Endothelial cell of umbilical vein (primary cell): ENCODE measurements at regions of chr1 and their contacts with region 1.

Region 1: DNA sequence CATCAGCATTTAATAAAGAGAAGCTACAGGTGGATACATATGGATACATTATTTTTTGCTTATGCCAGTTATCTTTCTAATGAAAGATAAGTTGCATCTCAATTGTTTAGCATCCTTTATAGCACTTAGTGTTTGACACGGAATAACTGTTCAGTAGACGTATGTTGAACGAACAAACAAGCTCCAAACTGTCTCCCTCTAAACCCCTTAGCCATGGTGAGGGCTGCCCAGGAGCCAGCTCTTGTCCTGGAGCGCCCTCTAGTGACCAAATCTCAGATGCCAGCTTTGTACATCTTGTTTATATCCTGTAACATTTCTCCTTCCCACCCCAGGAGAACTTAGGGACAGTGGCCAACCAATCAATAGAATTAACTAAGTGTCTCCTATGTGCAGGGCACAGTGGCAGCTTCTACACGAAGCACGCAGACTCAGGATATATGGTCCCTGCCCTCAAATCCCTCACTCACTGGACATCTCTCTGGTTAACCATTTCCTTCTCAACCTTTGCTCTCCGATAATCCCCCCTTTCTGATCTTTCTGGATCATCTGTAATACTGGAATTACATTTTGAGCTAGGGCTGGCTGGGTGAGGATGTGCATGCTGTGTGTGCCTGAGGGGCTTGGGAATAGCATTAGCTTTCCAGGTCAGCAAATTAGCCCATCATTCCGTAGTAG is 22.9 kb downstream of the KCNA10 start:
- DNase-seq: peak; percentile 75
- H3K4me3 ChIP-seq: no peak overlapping the region
- H3K27ac ChIP-seq: no peak overlapping the region
- H3K4me1 ChIP-seq: no peaks in the 10 kb centered on the region
- H3K27me3 ChIP-seq: peaks cover 0 to 7% of the 10 kb centered on the region in 2 experiments
- CTCF ChIP-seq: peak; percentile 77 to 85
- POLR2A ChIP-seq: no peak

Region 2: GRCh38 chr1:110053557-110054428 is 442.3 kb before region 1 on chr1:
- CTCF ChIA-PET with region 1: interaction called, 16 read pairs
- POLR2A ChIA-PET with region 1: no interaction called
- dilution Hi-C with region 1: no loop called
- intact Hi-C with region 1: no loop called
- DNase-seq: peak; percentile 39
- H3K4me3 ChIP-seq: no peak overlapping the region
- H3K27ac ChIP-seq: no peak overlapping the region
- H3K4me1 ChIP-seq: no peaks in the 10 kb centered on the region
- H3K27me3 ChIP-seq: no peaks in the 10 kb centered on the region
- CTCF ChIP-seq: peak; percentile 83 to 97
- POLR2A ChIP-seq: no peak

Region 3: DNA sequence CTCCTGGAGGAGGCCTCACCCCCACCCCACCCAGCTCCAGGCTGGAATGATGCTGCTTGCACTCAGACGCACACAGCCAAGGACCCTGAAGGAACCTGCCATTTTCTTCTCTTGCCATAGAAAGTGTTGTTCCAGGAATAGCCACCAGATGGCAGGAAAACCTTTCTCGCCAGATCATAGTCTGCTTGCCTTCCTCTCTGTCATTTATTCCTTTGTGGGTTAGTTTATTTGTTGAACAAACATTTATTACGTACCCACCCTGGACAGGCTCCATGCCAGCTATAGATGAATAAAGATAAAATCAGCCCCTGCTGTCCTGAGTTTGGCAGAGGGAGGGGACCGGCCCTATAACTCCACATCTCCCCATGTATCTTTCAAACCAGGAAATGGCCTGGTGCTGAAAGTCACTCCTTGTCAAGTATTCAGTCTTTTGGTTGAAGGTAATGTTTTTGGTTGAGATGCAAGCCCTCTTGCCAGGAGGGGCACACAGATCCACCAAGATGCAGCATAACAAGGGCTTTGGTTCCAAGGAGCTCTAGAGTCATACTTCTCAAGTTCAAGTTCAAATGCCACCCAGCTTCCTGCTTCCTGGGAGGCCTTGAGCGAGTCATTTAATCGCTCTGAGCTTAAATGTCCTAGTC is 292.9 kb before region 1 on chr1:
- CTCF ChIA-PET with region 1: interaction called, 140 read pairs
- POLR2A ChIA-PET with region 1: no interaction called
- dilution Hi-C with region 1: no loop called
- intact Hi-C with region 1: loop called (anchors 1 kb)
- DNase-seq: peak; percentile 72
- H3K4me3 ChIP-seq: no peak overlapping the region
- H3K27ac ChIP-seq: no peak overlapping the region
- H3K4me1 ChIP-seq: peaks cover 4% of the 10 kb centered on the region
- H3K27me3 ChIP-seq: no peaks in the 10 kb centered on the region
- CTCF ChIP-seq: peak; percentile 67 to 76
- POLR2A ChIP-seq: no peak

Region 4: DNA sequence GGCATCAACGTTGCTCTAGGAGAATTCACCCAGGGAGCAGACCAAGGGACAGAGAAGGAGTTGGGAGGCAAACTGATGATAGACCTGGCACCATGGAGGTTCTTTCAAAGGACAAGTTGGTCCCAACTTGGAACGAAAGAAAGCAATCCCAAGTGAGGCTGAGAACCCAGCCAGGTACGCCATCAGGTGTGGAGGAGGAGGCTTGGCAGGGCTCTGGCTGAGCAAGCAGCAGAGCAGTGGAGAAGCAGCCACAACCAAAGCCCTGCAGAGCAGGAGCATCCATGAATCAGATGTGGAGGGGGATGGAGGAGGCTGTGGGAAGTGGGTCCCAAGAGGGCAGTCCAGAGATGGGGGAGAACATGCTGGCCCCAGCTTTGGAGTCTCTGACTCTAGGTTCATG is 193.2 kb before region 1 on chr1:
- CTCF ChIA-PET with region 1: no interaction called
- POLR2A ChIA-PET with region 1: no interaction called
- dilution Hi-C with region 1: no loop called
- intact Hi-C with region 1: no loop called
- DNase-seq: no peak
- H3K4me3 ChIP-seq: no peak overlapping the region
- H3K27ac ChIP-seq: no peak overlapping the region
- H3K4me1 ChIP-seq: no peaks in the 10 kb centered on the region
- H3K27me3 ChIP-seq: peaks cover 17 to 26% of the 10 kb centered on the region in 2 experiments
- CTCF ChIP-seq: no peak
- POLR2A ChIP-seq: no peak

Region 5: GRCh38 chr1:110319332-110320152 is 176.5 kb before region 1 on chr1:
- CTCF ChIA-PET with region 1: interaction called, 58 read pairs
- POLR2A ChIA-PET with region 1: no interaction called
- dilution Hi-C with region 1: no loop called
- intact Hi-C with region 1: no loop called
- DNase-seq: no peak
- H3K4me3 ChIP-seq: no peak overlapping the region
- H3K27ac ChIP-seq: no peak overlapping the region
- H3K4me1 ChIP-seq: no peaks in the 10 kb centered on the region
- H3K27me3 ChIP-seq: no peaks in the 10 kb centered on the region
- CTCF ChIP-seq: no peak
- POLR2A ChIP-seq: no peak

Region 6: DNA sequence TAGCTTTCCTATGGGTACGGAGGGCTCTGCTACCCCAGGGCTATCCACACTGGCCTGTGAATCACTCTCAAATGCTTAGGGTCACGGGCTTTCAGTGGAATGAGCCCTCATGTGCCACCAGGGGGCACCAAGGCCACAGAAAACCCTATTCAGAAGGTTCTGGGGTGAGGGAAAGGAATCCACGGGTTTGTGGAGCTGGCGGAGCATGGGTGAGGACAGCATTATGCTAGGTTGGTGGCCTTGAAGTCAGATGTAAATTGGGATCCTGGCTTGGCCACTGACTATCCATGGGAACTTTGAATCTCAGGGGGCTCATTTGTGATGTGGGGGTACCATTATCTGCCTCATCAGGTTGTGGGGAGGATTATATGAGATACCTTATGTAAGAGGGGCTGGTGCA is 83.5 kb before region 1 on chr1:
- CTCF ChIA-PET with region 1: interaction called, 120 read pairs
- POLR2A ChIA-PET with region 1: interaction called, 3 read pairs
- dilution Hi-C with region 1: no loop called
- intact Hi-C with region 1: loop called (anchors 1 kb)
- DNase-seq: peak; percentile 53
- H3K4me3 ChIP-seq: no peak overlapping the region
- H3K27ac ChIP-seq: no peak overlapping the region
- H3K4me1 ChIP-seq: peaks cover 4% of the 10 kb centered on the region
- H3K27me3 ChIP-seq: peaks cover 7 to 8% of the 10 kb centered on the region in 2 experiments
- CTCF ChIP-seq: peak; percentile 74 to 76
- POLR2A ChIP-seq: no peak

Region 7: GRCh38 chr1:110471163-110471562 is 24.9 kb before region 1 on chr1:
- CTCF ChIA-PET with region 1: interaction called, 78 read pairs
- POLR2A ChIA-PET with region 1: no interaction called
- dilution Hi-C with region 1: no loop called
- intact Hi-C with region 1: no loop called
- DNase-seq: no peak
- H3K4me3 ChIP-seq: no peak overlapping the region
- H3K27ac ChIP-seq: no peak overlapping the region
- H3K4me1 ChIP-seq: no peaks in the 10 kb centered on the region
- H3K27me3 ChIP-seq: peaks cover 0 to 4% of the 10 kb centered on the region in 2 experiments
- CTCF ChIP-seq: no peak
- POLR2A ChIP-seq: no peak

Region 8: GRCh38 chr1:110508038-110508940 is 12.2 kb after region 1 on chr1:
- CTCF ChIA-PET with region 1: interaction called, 17 read pairs
- POLR2A ChIA-PET with region 1: no interaction called
- dilution Hi-C with region 1: no loop called
- intact Hi-C with region 1: no loop called
- DNase-seq: no peak
- H3K4me3 ChIP-seq: no peak overlapping the region
- H3K27ac ChIP-seq: no peak overlapping the region
- H3K4me1 ChIP-seq: no peaks in the 10 kb centered on the region
- H3K27me3 ChIP-seq: peaks cover 0 to 3% of the 10 kb centered on the region in 2 experiments
- CTCF ChIP-seq: no peak
- POLR2A ChIP-seq: no peak

Region 9: DNA sequence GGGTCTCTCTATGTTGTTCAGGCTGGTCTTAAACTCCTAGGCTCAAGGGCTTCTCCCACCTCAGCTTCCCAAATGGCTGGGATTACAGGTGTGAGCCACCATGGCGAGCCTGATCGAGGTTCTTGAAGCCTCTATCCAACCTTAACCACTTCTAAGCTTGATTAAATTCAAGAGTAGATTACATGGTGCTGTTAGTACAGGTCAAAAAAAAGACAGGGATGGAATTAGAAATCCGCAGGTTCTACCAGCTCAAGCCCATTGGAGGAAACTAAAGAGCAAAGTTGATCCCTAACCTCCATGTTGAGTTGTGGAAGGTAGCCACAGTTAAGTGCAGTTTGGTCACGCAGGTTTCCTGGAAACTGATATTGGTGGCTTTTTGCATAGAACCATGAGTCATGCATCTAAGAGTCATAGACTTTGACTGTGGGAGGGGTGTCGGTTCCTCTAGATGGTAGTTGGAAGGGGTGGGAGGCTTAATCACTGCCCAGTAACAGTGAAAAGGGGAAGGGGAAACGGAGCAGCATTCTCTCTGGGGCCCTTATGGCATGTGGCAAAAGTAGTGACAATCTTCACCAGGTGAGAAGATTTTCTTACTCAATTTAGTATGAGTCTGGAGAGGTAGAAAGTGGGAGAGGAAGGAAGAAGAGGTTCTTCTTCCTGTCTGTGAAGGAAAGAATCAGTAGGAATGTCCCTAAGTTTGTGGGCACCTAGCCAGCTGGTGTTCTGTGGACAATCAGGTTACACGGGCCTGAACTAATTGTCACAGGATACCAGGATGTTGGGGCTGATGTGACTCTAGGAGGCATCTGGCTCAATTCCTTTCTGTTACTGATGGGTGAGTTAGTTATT is 383.9 kb after region 1 on chr1:
- CTCF ChIA-PET with region 1: no interaction called
- POLR2A ChIA-PET with region 1: no interaction called
- dilution Hi-C with region 1: no loop called
- intact Hi-C with region 1: no loop called
- DNase-seq: no peak
- H3K4me3 ChIP-seq: no peak overlapping the region
- H3K27ac ChIP-seq: no peak overlapping the region
- H3K4me1 ChIP-seq: no peaks in the 10 kb centered on the region
- H3K27me3 ChIP-seq: no peaks in the 10 kb centered on the region
- CTCF ChIP-seq: no peak
- POLR2A ChIP-seq: no peak